Activated CD8-positive, alpha-beta T cell treated with anti-CD3 and anti-CD28 coated beads for 36 hours (primary cell): ENCODE measurements at regions of chr17 and their contacts with region 1.

Region 1: DNA sequence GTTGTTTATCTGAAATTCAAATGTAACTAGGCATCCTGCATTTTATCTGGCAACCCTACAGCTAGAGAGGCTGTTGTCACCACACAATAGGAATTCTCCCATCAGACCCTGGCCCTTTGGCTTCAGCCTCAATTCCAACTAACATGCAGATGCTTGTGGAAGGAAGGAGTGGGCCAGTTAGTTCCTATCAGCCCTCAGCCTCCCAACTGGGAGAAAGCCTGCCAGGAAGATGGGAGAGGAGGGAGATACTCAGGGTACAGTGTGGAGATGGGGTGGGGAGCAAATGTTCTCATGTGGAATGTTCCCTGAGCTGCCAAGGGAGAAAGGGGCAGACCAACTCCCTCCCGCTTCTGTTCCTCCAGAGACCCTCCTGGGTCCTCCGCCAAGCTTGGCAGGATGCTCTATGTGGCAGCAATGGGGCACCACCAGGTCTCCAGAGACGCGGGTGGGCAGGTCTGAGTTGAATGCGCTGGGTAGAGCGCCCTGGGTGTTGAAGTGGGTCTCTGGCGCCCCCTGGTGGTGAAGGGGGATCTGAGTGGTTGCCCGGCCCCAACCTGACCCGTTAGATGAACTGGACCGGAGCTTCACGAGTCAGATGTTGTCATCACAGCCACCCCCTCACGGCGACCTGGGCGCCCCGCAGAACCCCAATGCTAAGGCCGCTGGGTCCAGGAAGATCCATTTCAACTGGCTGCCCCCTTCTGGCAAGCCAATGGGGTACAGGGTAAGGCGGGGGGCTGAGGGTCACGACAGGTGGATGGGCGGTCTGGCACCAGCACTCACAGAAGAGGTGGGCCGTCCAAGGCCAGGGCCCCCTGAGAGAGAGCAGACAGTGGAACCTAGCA is 15.2 kb downstream of the GALK1 start:
- DNase-seq: peak; percentile 95
- ATAC-seq: peak; percentile 77
- H3K4me3 Mint-ChIP-seq: no peak overlapping the region
- H3K27ac Mint-ChIP-seq: no peak overlapping the region
- H3K4me1 Mint-ChIP-seq: peaks cover 17% of the 10 kb centered on the region
- H3K27me3 Mint-ChIP-seq: peaks cover 1% of the 10 kb centered on the region
- CTCF ChIP-seq: peak; percentile 96

Region 2: GRCh38 chr17:75614006-75614405 is 135.8 kb before region 1 on chr17:
- CTCF ChIA-PET with region 1: interaction called, 10 read pairs
- POLR2A ChIA-PET with region 1: no interaction called
- intact Hi-C with region 1: no loop called
- DNase-seq: no peak
- ATAC-seq: no peak
- H3K4me3 Mint-ChIP-seq: no peak overlapping the region
- H3K27ac Mint-ChIP-seq: no peak overlapping the region
- H3K4me1 Mint-ChIP-seq: no peaks in the 10 kb centered on the region
- H3K27me3 Mint-ChIP-seq: no peaks in the 10 kb centered on the region
- CTCF ChIP-seq: no peak

Region 3: DNA sequence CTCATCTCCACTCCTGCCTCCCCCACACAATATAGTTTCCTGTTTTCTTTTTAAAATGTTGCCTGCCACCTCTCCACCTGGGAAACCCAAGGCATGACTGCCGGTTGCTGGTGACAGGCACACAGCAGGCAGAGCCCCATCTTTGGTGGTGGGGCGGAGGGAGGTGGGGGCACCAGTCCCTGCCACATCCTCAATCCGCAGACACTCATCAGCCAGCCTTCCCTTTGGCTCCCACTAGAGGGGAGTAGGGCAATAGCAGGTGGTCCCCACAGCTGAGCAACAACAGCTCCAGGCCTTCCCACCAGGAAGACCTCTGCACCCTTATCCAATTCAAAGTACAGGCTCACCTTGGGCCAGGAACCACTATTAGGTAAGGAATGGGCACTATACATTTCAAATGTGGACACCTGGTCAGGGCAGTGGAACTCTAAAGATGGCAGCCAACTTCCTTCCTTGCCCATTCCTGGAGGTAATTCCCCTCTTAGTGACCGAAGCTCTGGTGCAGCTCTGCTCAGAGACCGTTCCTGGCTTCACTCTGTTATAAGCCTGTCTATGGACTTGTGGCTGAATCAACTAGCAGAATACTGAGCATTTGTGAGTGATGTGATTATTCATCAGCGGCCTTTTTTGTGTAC is 96.7 kb before region 1 on chr17:
- CTCF ChIA-PET with region 1: interaction called, 79 read pairs
- POLR2A ChIA-PET with region 1: no interaction called
- intact Hi-C with region 1: no loop called
- DNase-seq: peak; percentile 54
- ATAC-seq: peak; percentile 98
- H3K4me3 Mint-ChIP-seq: no peak overlapping the region
- H3K27ac Mint-ChIP-seq: peak overlapping the region; percentile 61
- H3K4me1 Mint-ChIP-seq: peaks cover 5% of the 10 kb centered on the region
- H3K27me3 Mint-ChIP-seq: no peaks in the 10 kb centered on the region
- CTCF ChIP-seq: peak; percentile 73

Region 4: GRCh38 chr17:75679706-75680442 is 69.9 kb before region 1 on chr17:
- CTCF ChIA-PET with region 1: interaction called, 347 read pairs
- POLR2A ChIA-PET with region 1: interaction called, 3 read pairs
- intact Hi-C with region 1: loop called (anchors 2 kb)
- DNase-seq: no peak
- ATAC-seq: no peak
- H3K4me3 Mint-ChIP-seq: no peak overlapping the region
- H3K27ac Mint-ChIP-seq: peak overlapping the region; percentile 13
- H3K4me1 Mint-ChIP-seq: peaks cover 30% of the 10 kb centered on the region
- H3K27me3 Mint-ChIP-seq: no peaks in the 10 kb centered on the region
- CTCF ChIP-seq: no peak

Region 5: DNA sequence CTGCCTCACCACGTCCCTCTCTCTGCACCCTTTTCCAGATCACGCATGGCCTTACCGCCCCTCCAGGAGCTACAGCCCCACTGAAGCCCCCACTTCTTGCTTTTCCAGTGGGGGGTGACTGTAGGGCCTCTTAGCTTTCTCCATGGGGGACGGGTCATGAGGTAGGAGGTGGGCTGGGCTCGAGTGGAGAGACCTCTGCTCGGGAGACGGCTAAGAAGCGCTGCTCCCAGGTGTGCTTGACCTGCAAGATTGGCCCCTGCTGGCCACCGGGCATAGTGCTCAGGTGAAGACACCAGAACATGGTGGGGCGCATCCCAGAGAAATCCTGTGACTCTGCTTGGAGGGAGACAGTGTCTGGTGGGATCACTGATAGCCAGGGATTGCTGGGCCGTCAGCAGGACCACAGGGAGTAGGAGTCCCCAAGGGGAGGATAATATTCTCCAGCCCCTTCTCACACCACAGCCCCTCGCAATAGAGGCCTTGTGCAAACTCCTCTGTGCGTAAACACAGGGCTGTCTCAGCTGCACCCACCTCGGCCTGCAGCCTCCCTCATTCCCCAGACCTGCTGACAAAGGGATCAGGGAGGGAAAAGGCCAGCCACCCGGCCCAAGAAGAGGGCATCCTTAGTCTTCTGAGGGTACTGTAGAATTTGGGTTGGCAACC is 24.2 kb after region 1 on chr17:
- CTCF ChIA-PET with region 1: interaction called, 18 read pairs
- POLR2A ChIA-PET with region 1: interaction called, 21 read pairs
- intact Hi-C with region 1: no loop called
- DNase-seq: no peak
- ATAC-seq: no peak
- H3K4me3 Mint-ChIP-seq: no peak overlapping the region
- H3K27ac Mint-ChIP-seq: no peak overlapping the region
- H3K4me1 Mint-ChIP-seq: peaks cover 22% of the 10 kb centered on the region
- H3K27me3 Mint-ChIP-seq: no peaks in the 10 kb centered on the region
- CTCF ChIP-seq: no peak

Region 6: DNA sequence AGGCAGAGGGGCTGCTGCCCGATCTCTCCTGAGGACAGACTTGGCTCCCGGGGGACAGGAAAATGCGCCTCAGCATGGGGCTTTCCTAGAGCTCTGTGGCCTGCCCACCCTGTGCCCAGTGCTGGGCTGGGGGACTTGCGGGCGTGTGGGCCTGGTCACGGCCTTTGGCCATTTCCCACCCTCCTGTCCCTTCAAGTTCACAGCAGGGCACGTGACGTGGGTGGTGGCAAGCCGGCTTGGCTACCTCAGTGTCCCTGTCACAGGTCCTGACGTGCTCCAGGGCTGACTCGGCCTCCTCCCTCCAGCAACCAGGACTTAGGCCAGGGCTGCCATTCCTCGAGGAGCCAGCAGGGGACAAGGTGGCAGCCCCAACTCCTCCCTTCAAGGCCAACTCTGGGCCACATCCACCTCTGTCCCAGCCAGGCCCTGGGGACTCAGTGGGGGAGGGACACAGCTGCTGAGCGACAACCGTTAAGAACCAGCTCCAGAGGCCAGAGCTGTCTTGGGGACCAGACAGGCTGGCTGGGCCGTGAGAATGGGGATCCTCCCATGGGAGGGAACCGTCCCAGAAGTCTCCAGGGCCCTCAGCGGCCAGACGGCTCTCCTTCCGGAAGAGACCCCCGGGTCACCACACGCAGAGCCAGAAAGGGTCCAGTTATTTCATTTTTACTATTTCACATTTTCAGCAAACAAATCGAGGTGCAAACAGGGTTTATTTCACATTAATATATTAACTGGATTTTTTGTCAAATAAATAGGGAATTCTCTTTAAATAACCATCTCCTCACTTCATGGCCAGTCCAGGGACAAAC is 95.5 kb after region 1 on chr17:
- CTCF ChIA-PET with region 1: interaction called, 10 read pairs
- POLR2A ChIA-PET with region 1: no interaction called
- intact Hi-C with region 1: no loop called
- DNase-seq: peak; percentile 83
- ATAC-seq: peak; percentile 72
- H3K4me3 Mint-ChIP-seq: peak overlapping the region; percentile 96
- H3K27ac Mint-ChIP-seq: peak overlapping the region; percentile 75
- H3K4me1 Mint-ChIP-seq: peaks cover 30% of the 10 kb centered on the region
- H3K27me3 Mint-ChIP-seq: no peaks in the 10 kb centered on the region
- CTCF ChIP-seq: peak; percentile 72